GM18951 (cell line): ENCODE measurements at regions of chr20 and their contacts with region 1.

Region 1: DNA sequence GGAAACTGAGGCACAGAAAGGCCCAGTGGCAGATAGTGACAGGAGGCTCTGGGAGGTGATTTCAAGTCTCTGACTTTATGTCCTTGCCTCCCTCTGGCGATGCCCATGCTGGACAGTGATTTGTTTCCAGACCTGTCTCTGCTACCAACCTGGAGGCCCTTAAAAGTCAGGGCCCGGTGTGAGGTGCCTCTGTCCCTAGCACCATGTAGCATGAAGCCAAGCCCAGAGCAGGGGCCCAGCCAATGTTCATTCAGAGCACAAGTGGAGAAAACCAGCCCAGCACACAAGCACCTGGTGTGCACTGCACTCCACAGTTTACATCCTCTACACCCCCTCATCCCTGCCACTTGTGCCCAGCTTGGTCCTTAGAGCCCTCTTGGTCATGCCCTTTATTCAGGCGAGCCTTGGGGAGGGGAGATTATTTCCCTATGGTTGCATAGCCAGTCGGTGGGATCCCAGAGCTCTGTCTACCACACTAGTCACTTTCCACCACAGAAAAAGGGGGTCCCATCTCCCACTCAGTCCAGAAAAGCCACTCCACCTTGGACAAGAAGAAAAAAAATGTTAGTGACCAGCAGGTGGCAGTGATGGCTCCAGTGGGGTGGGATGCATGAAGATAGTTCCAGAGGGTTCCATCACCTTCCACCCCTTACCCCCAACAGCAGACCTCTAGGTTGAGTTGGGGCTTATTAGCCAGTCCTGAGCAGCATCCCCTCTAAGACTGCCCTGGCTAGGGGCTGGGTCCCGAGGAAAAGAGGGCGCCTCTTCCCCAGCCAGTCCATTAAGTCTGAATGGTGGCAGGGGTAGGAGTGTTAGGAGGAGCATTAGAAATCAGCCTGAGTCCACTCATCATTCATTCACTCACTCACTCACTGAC is 30.9 kb downstream of the KIAA1755 start:
- POLR2A ChIP-seq: no peak

Region 2: GRCh38 chr20:38057351-38057972 is 172.2 kb before region 1 on chr20:
- in situ Hi-C with region 1: loop called (anchors 5 kb)
- POLR2A ChIP-seq: no peak

Region 3: GRCh38 chr20:38395165-38395564 is 165.6 kb after region 1 on chr20:
- in situ Hi-C with region 1: loop called (anchors 10 kb)
- POLR2A ChIP-seq: no peak